ENCODE measurements at regions of chr3 and their contacts with region 1.

Region 1: GRCh38 chr3:184874709-184875644 is 63.0 kb downstream of the VPS8 start:
- DNase-seq: no peak
- H3K4me3 ChIP-seq: no peak overlapping the region
- H3K27ac ChIP-seq: no peak overlapping the region
- H3K4me1 ChIP-seq: no peaks in the 10 kb centered on the region
- H3K27me3 ChIP-seq: no peaks in the 10 kb centered on the region
- CTCF ChIP-seq: peak in 4 of 6 experiments; percentile 40 to 57 (median 54)
- POLR2A ChIP-seq: no peak

Region 2: DNA sequence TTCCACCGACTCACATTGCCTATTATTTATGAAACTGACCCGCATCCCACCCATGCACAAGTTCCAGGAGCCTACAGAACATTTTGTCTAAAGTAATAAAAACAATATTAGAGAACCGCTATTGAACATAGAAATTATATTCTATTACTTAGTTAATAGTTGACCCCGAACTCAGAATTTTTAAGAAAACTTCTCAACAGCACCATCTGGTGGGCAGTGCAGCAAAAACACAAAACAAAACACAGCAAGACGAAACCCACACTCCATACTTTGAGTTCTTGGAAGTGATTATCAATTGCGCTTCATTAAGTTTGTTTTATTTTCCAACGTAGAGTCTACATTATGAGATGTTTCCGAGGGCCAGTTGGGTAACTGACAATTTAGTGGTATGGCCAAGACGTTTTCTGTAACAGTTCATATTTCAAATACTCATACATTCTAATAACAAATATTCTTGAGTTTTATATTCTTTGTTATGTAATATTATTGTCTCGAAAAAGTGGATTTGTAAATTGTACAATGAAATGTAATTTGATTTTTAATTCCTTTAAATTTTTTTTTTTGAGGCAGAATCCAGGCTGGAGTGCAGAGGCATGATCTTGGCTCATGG is 301.9 kb after region 1 on chr3:
- intact Hi-C with region 1: loop called (anchors 5 kb)
- DNase-seq: peak; percentile 10 to 27
- H3K4me3 ChIP-seq: no peak overlapping the region
- H3K27ac ChIP-seq: no peak overlapping the region
- H3K4me1 ChIP-seq: no peaks in the 10 kb centered on the region
- H3K27me3 ChIP-seq: no peaks in the 10 kb centered on the region
- CTCF ChIP-seq: peak; percentile 30 to 63 (median 46)
- POLR2A ChIP-seq: no peak

Measured in thyroid gland (tissue), 4 donors.